Psoas muscle (tissue), 8 donors: ENCODE measurements at regions of chr22 and their contacts with region 1.

Region 1: DNA sequence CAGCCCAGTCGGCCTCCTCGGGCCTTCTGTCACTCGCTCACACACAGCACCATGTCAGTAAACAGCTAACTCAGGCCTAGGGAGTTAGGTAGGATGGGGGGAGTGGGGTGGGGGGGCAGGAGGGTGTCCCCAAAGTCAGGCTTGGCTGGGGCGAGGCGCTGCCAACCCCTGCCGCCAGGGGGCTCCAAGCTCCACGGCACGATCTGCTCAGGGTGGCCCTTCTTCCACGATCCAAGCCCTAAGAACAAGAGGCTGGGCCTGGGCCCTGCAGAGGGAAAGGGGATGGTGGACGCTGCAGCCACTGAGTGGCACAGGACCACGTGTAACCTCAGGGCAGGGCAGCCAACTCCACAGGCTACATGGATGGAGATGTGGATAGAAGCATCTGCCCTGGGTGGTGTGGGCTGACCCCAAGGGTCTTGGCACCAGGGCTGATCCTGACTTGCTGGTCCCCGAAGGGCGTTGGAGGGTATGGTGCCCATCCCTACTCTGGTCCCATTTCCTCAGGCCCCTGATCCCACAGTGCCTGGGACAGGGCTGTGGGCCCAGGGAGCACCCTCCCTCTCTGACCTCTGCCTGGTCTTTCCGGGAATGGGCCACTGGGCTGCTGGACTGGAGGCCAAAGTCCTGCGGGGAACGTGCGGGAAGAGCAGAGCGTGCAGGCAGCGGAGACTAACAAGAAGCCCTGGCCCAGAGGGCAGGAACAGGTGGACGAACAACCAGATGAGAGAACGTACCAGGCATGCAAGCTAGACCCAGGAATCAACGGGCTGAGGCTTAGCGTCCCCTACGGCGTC is 29.1 kb upstream of the TXNRD2 start:
- DNase-seq: peak; percentile 74 to 86
- ATAC-seq: peak; percentile 76 to 85 (median 78)
- H3K4me3 ChIP-seq: no peak overlapping the region
- H3K27ac ChIP-seq: no peak overlapping the region
- H3K4me1 ChIP-seq: no peaks in the 10 kb centered on the region
- H3K27me3 ChIP-seq: no peaks in the 10 kb centered on the region
- CTCF ChIP-seq: peak; percentile 92

Region 2: GRCh38 chr22:19982991-19983578 is 12.4 kb after region 1 on chr22:
- intact Hi-C with region 1: loop called in 1 of 2 experiments (anchors 1 kb)
- DNase-seq: peak; percentile 62 to 89
- ATAC-seq: peak; percentile 54 to 70 (median 66)
- H3K4me3 ChIP-seq: no peak overlapping the region
- H3K27ac ChIP-seq: peak overlapping the region; percentile 94
- H3K4me1 ChIP-seq: peaks cover 59% of the 10 kb centered on the region
- H3K27me3 ChIP-seq: no peaks in the 10 kb centered on the region
- CTCF ChIP-seq: no peak

Region 3: DNA sequence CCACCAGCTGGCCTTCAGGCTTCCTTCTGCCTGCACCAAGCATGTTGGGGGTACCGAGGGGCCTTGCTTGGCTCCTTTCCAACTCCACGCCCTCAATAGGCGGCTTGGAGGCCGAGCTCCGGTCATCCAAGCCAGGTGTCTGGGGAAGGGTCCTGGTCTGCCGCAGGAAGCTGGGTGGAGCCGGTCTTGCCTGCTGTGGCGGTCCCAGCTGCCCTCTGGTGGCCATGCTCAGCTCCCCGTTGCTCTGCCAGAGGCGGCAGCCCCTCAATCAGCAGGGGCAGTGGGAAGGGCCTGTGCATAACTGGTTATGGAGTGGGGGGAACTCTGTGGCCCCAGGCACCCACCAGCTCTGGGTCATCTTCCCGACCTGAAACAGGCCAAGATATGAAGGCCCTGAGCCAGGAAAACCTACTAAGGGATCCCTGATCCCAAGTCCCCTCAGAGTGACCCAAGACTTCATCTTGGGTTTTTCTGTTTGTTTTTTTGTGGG is 42.8 kb after region 1 on chr22:
- intact Hi-C with region 1: loop called (anchors 1 kb)
- DNase-seq: peak; percentile 66 to 88
- ATAC-seq: peak; percentile 57 to 70 (median 60)
- H3K4me3 ChIP-seq: no peak overlapping the region
- H3K27ac ChIP-seq: no peak overlapping the region
- H3K4me1 ChIP-seq: peaks cover 24% of the 10 kb centered on the region
- H3K27me3 ChIP-seq: no peaks in the 10 kb centered on the region
- CTCF ChIP-seq: peak; percentile 84

Region 4: GRCh38 chr22:20061481-20061861 is 90.8 kb after region 1 on chr22:
- intact Hi-C with region 1: no loop called
- DNase-seq: no peak
- ATAC-seq: peak in 1 of 4 donors; percentile 4
- H3K4me3 ChIP-seq: no peak overlapping the region
- H3K27ac ChIP-seq: no peak overlapping the region
- H3K4me1 ChIP-seq: peaks cover 10% of the 10 kb centered on the region
- H3K27me3 ChIP-seq: no peaks in the 10 kb centered on the region
- CTCF ChIP-seq: no peak

Region 5: DNA sequence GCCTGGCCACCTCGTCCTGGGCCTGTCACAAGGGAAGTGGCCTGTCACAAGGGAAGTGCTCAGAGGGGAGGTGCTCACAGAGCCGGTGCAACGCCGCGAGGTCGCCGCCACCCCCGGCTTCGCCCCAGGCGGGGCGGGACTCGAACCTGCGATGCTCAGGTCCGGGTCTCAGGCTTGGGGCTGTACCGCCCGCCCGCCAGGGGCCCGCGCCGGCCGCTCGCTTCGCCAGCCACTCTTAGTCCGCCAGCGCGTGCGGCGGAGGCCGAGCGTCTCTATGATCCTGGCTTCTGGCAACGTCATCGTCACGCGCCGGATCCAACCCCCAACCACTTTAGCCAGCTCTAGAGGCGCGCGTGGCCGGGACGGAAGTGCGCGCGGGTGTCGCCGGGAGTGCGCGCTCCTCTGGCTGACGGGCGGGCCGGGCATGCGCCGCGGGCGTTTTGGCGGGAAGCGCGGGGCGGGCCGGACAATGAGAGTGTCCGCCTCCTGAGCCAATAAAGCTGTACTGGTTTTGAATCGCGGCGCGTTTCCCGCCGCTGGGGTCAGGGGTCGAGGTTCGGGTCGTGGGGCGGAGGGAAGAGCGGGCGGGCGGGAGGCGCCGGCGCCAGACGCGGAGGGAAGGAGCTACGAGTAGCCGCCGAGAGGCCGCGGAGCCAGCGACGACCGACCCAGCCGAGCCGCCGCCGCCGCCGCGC is 146.4 kb after region 1 on chr22 and contains the start of gene TRMT2A:
- intact Hi-C with region 1: no loop called
- DNase-seq: peak; percentile 99
- ATAC-seq: peak; percentile 91 to 93 (median 92)
- H3K4me3 ChIP-seq: peak within 1 kb of the TSS; percentile 92
- H3K27ac ChIP-seq: peak within 1 kb of the TSS; percentile 86
- H3K4me1 ChIP-seq: peaks cover 30% of the 10 kb centered on the region
- H3K27me3 ChIP-seq: no peaks in the 10 kb centered on the region
- CTCF ChIP-seq: no peak
- total RNA-seq, gene TRMT2A: 20.5 to 34.1 (median 24.9) TPM

Region 6: DNA sequence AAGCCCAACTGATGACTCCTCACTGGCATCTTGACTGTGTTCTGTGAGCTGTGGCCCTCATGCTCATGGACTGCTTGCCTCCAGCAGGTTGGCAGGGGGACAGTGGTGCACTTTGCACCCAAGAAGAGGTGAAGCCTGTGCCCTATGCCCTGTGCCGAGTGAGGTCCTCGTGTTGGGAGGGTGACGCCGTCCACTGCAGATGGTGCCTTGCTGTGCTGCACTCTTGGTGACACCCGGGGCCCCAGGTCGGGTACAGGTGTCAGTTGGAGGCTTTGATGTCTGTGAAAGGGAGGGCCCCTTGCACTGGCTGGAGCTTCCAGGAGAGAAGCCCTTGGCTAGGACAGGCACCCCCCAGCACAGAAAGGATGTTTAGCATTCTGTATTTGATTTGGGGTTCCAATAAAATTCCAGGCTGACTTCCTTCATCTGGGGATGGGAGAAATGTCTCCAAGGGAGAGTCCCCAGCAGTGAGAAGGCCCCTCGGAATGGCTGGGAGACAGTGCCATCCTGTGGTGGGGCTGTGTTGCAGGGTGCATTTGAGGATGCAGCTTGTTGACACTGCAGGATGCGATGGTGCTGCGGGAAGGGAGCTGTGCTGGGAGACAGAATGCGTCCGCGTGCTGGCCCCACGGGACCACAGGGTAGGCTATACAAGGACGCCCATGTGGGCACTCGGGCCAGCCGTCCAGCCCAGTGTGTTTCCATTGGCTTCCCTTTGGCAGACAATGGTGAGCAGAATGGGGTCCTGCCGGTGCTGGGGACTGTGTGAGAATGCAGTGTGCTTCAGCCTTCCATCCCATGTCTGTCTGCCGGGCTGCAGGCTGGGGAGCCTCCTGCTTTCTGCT is 158.4 kb after region 1 on chr22:
- intact Hi-C with region 1: loop called in 1 of 2 experiments (anchors 5 kb)
- DNase-seq: no peak
- ATAC-seq: peak in 1 of 4 donors; percentile 28
- H3K4me3 ChIP-seq: no peak overlapping the region
- H3K27ac ChIP-seq: no peak overlapping the region
- H3K4me1 ChIP-seq: peaks cover 14% of the 10 kb centered on the region
- H3K27me3 ChIP-seq: no peaks in the 10 kb centered on the region
- CTCF ChIP-seq: peak; percentile 40